ENCODE measurements at regions of chrX and their contacts with region 1.

Region 1: GRCh38 chrX:107654872-107655761 is 26.8 kb downstream of the PRPS1 start:
- DNase-seq: peak; percentile 45 to 68 (median 64)
- H3K4me3 ChIP-seq: no peak overlapping the region
- H3K27ac ChIP-seq: no peak overlapping the region
- H3K4me1 ChIP-seq: no peaks in the 10 kb centered on the region
- H3K27me3 ChIP-seq: no peaks in the 10 kb centered on the region
- CTCF ChIP-seq: peak in 1 of 3 donors; percentile 57
- EP300 ChIP-seq: no peak
- POLR2A ChIP-seq: no peak

Region 2: DNA sequence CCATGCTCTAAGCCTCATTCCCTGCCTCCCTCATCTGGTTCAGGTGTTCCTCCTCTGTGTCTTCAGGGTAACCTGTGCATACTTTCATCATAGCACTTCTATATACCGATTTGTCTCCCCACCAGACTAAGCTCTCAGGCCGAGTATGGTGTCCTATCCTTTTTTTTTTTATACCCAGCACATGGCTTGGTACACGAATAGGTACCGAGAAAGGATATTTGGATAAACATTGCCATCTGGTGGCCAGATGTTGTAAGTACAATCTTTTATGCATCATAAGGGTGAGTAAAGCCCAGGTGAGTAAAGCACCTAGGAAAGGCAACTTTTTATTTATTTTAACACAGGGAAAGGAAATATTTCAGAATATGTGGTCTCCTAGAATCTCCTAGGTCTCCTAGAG is 238.9 kb after region 1 on chrX:
- intact Hi-C with region 1: loop called in 1 of 4 experiments (anchors 10 kb)
- DNase-seq: no peak
- H3K4me3 ChIP-seq: no peak overlapping the region
- H3K27ac ChIP-seq: no peak overlapping the region
- H3K4me1 ChIP-seq: no peaks in the 10 kb centered on the region
- H3K27me3 ChIP-seq: no peaks in the 10 kb centered on the region
- CTCF ChIP-seq: peak; percentile 24 to 62 (median 50)
- EP300 ChIP-seq: no peak
- POLR2A ChIP-seq: no peak